WTC11 (cell line): ENCODE measurements at regions of chr1 and their contacts with region 1.

Region 1: GRCh38 chr1:30801771-30802198 is 44.2 kb upstream of the LAPTM5 start:
- DNase-seq: peak; percentile 97
- ATAC-seq: peak; percentile 62
- H3K4me3 Mint-ChIP-seq: peak overlapping the region; percentile 54
- H3K27ac Mint-ChIP-seq: no peak overlapping the region; the same call in 1 of the 2 replicates
- H3K4me1 Mint-ChIP-seq: peaks cover 34% of the 10 kb centered on the region
- H3K27me3 Mint-ChIP-seq: peaks cover 7% of the 10 kb centered on the region
- CTCF ChIP-seq: peak; percentile 92

Region 2: GRCh38 chr1:30645807-30646206 is 156.0 kb before region 1 on chr1:
- CTCF ChIA-PET with region 1: no interaction called
- POLR2A ChIA-PET with region 1: no interaction called
- DNase-seq: no peak
- ATAC-seq: no peak
- H3K4me3 Mint-ChIP-seq: no peak overlapping the region
- H3K27ac Mint-ChIP-seq: no peak overlapping the region
- H3K4me1 Mint-ChIP-seq: no peaks in the 10 kb centered on the region
- H3K27me3 Mint-ChIP-seq: peaks cover 5% of the 10 kb centered on the region; the same call in 1 of the 2 replicates
- CTCF ChIP-seq: no peak

Region 3: GRCh38 chr1:30708361-30708728 is 93.4 kb before region 1 on chr1:
- CTCF ChIA-PET with region 1: no interaction called
- POLR2A ChIA-PET with region 1: no interaction called
- DNase-seq: no peak
- ATAC-seq: no peak
- H3K4me3 Mint-ChIP-seq: no peak overlapping the region
- H3K27ac Mint-ChIP-seq: no peak overlapping the region
- H3K4me1 Mint-ChIP-seq: peaks cover 3% of the 10 kb centered on the region; the same call in 1 of the 2 replicates
- H3K27me3 Mint-ChIP-seq: peaks cover 2% of the 10 kb centered on the region; the same call in 1 of the 2 replicates
- CTCF ChIP-seq: no peak

Region 4: DNA sequence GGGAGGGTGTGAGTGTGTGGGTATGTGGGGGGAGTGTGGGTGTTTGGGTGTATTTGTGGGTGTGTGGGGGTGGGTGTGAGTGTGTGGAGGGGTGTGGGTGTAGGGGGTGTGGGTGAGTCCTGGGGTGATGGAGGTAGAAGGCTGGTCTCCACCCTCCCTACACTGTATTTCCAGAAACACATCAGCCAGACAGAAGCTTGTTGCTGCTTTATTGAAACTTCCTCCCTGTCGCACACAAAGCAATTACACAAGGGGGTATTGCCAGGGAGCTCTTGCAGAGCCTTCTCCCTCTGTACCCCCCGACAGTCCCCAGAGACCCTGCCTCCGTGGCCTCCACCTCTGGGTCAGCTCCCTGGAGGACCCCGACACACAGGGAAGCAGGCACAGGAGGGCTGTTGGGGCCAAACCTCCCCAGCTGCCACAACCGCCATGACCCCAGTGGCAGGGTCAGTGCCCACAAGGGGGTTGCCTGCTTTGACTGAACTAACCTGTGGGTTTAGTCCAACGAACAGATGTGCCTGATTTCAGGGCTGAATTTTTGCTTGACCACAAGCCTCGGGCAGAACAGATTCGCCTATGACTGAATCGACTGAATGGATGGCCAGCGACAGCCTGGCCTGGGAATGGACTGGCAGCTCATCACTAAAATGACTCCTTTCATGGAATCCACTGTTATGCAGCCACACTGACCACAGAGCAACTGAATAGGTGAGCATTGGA is 69.3 kb before region 1 on chr1:
- CTCF ChIA-PET with region 1: interaction called, 10 read pairs
- POLR2A ChIA-PET with region 1: no interaction called
- DNase-seq: no peak
- ATAC-seq: no peak
- H3K4me3 Mint-ChIP-seq: no peak overlapping the region
- H3K27ac Mint-ChIP-seq: no peak overlapping the region
- H3K4me1 Mint-ChIP-seq: peaks cover 22% of the 10 kb centered on the region
- H3K27me3 Mint-ChIP-seq: no peaks in the 10 kb centered on the region
- CTCF ChIP-seq: no peak

Region 5: DNA sequence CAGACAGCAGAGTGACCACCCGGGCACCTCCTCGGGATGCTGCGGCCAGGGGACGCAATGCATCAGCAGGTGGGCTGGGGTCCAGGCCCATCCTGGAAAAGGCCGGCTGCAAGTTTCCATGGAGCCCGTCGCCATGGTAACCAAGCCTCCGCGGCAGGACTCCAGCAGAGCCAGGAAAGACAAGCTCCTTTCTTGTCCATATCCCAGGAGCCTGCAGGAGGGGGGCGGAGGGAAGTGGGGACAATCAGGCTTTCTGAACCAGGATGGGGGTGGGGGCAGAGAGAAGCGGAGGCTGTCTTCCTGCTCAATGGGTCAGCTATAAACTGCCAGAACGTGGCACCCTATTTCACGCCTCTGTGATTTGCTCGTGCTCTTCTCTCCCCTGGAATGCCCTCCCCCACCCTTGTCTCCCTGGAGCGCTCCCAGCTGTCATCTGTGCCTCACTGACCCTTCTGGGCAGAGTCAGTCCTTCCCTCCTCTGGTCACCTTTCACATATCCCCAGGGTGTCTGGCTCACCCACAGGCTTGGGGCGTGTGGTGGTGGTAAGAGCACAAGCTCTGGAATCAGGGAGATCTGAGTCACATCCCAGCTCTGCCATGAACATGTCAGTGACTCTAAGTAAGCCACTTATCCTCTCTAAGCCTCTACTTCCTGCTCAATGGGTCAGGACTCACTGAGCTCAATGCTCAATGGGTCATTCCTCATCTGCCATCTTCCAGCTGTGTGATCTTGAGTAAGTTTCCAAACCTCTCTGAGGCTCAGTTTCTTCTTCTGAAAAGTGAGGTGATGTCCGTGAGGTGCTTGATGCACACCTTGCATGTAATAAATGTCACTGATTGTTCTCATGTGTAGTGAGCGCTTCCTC is 14.7 kb after region 1 on chr1:
- CTCF ChIA-PET with region 1: interaction called, 82 read pairs
- POLR2A ChIA-PET with region 1: interaction called, 3 read pairs
- DNase-seq: peak; percentile 91
- ATAC-seq: peak; percentile 74
- H3K4me3 Mint-ChIP-seq: no peak overlapping the region
- H3K27ac Mint-ChIP-seq: no peak overlapping the region
- H3K4me1 Mint-ChIP-seq: peaks cover 20% of the 10 kb centered on the region
- H3K27me3 Mint-ChIP-seq: no peaks in the 10 kb centered on the region
- CTCF ChIP-seq: no peak

Region 6: GRCh38 chr1:30856260-30856790 is 54.5 kb after region 1 on chr1:
- CTCF ChIA-PET with region 1: interaction called, 25 read pairs
- POLR2A ChIA-PET with region 1: no interaction called
- DNase-seq: no peak
- ATAC-seq: peak; percentile 8; the same call in 1 of the 2 replicates
- H3K4me3 Mint-ChIP-seq: no peak overlapping the region
- H3K27ac Mint-ChIP-seq: no peak overlapping the region
- H3K4me1 Mint-ChIP-seq: peaks cover 58% of the 10 kb centered on the region
- H3K27me3 Mint-ChIP-seq: no peaks in the 10 kb centered on the region
- CTCF ChIP-seq: no peak

Region 7: GRCh38 chr1:30895944-30896660 is 94.3 kb after region 1 on chr1:
- CTCF ChIA-PET with region 1: interaction called, 606 read pairs
- POLR2A ChIA-PET with region 1: no interaction called
- DNase-seq: no peak
- ATAC-seq: no peak; the same call in 1 of the 2 replicates
- H3K4me3 Mint-ChIP-seq: no peak overlapping the region
- H3K27ac Mint-ChIP-seq: peak overlapping the region; percentile 9; the same call in 1 of the 2 replicates
- H3K4me1 Mint-ChIP-seq: peaks cover 16% of the 10 kb centered on the region
- H3K27me3 Mint-ChIP-seq: no peaks in the 10 kb centered on the region
- CTCF ChIP-seq: no peak

Region 8: GRCh38 chr1:30929135-30929889 is 127.5 kb after region 1 on chr1:
- CTCF ChIA-PET with region 1: interaction called, 58 read pairs
- POLR2A ChIA-PET with region 1: no interaction called
- DNase-seq: peak; percentile 65
- ATAC-seq: peak; percentile 71
- H3K4me3 Mint-ChIP-seq: no peak overlapping the region
- H3K27ac Mint-ChIP-seq: 0 out of 2 replicates have a peak overlapping the region, but pooled peaks have one; percentile 58
- H3K4me1 Mint-ChIP-seq: peaks cover 5% of the 10 kb centered on the region
- H3K27me3 Mint-ChIP-seq: no peaks in the 10 kb centered on the region
- CTCF ChIP-seq: peak; percentile 87; the same call in 1 of the 2 replicates